ENCODE measurements at regions of chr4 and their contacts with region 1.

Region 1: GRCh38 chr4:17544205-17544604 is 29.2 kb downstream of the CLRN2 start:
- DNase-seq: no peak
- H3K4me3 ChIP-seq: no peak overlapping the region
- H3K27ac ChIP-seq: no peak overlapping the region
- H3K4me1 ChIP-seq: no peaks in the 10 kb centered on the region
- H3K27me3 ChIP-seq: no peaks in the 10 kb centered on the region
- CTCF ChIP-seq: no peak
- EP300 ChIP-seq: no peak
- POLR2A ChIP-seq: no peak

Region 2: GRCh38 chr4:16505726-16506125 is 1038.5 kb before region 1 on chr4:
- intact Hi-C with region 1: no loop called
- DNase-seq: no peak
- H3K4me3 ChIP-seq: no peak overlapping the region
- H3K27ac ChIP-seq: no peak overlapping the region
- H3K4me1 ChIP-seq: no peaks in the 10 kb centered on the region
- H3K27me3 ChIP-seq: no peaks in the 10 kb centered on the region
- CTCF ChIP-seq: no peak
- EP300 ChIP-seq: no peak
- POLR2A ChIP-seq: no peak

Region 3: GRCh38 chr4:17356926-17357325 is 187.3 kb before region 1 on chr4:
- intact Hi-C with region 1: no loop called
- DNase-seq: no peak
- H3K4me3 ChIP-seq: no peak overlapping the region
- H3K27ac ChIP-seq: no peak overlapping the region
- H3K4me1 ChIP-seq: no peaks in the 10 kb centered on the region
- H3K27me3 ChIP-seq: no peaks in the 10 kb centered on the region
- CTCF ChIP-seq: no peak
- EP300 ChIP-seq: no peak
- POLR2A ChIP-seq: no peak

Region 4: DNA sequence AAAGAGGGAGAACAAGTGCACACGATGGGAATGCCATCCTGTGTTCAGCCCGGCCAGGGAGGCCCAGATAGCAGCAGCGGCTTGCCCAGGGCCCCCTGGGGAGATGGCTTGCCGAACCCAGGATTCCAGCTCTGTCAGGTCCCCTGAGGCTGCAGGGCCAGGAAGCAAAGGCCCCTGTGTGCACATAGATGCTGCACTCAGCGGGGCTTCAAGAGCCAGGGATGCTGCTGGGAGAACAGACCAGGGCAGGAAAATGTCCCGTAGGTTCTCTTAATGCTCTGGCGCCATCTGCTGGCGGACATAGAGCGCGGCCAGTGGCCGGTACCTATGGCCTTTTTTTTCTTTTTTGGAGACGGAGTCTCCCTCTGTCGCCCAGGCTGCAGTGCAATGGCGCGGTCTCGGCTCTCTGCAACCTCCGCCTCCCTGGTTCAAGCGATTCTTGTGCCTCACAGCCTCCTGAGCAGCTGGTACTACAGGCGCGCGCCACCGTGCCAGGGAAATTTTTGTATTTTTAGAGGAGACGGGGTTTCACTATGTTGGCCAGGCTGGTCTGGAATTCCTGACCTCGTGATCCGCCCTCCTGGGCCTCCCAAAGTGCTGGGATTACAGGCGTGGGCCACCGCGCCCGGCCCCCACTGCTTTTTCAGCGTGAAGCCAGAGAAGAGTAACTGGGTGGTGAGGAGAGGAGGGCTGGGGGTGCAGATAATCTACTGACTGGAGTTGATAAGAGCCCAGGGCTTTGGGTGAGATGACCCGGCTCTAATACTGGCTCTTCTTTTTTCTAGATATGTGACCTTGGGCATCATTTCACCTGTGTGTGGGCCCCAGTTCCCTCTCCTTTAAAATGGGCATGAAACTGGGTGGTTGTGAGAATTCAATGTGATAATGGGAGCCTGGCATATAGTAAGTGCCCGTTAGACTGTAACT is 92.8 kb after region 1 on chr4:
- intact Hi-C with region 1: loop called in 3 of 4 experiments (anchors 2 to 5 kb)
- DNase-seq: peak; percentile 57 to 84 (median 76)
- H3K4me3 ChIP-seq: no peak overlapping the region
- H3K27ac ChIP-seq: no peak overlapping the region
- H3K4me1 ChIP-seq: no peaks in the 10 kb centered on the region
- H3K27me3 ChIP-seq: no peaks in the 10 kb centered on the region
- CTCF ChIP-seq: peak; percentile 51 to 61 (median 60)
- EP300 ChIP-seq: no peak
- POLR2A ChIP-seq: no peak

Region 5: DNA sequence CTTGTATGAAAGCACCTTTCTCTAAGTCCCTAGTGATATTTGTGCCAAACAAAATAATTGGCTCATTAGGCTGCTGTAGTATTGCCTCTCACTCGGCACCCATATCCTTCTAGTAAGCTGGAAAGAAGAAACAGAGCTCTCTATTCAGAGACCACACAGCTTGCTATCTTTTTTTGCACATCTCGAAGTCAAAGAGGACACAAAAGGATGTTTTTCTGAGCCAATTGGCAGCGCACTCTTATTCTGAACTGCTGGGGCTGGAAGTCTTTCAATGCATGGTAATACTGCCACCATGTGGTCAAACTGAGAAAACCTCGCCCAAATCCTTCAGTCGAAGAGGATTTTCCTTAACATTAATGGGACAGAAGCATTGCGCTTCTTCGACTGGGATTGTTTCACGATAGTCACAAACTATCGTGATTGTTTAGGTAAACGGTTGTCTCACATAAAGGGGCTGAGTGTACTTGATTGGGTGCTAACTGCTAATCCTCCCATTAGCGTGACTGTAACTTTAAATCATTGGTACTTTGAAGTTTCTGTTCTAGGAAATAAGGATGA is 1049.3 kb after region 1 on chr4:
- intact Hi-C with region 1: loop called in 2 of 4 experiments (anchors 10 kb)
- DNase-seq: peak in 4 of 5 donors; percentile 25 to 53 (median 28)
- H3K4me3 ChIP-seq: no peak overlapping the region
- H3K27ac ChIP-seq: no peak overlapping the region
- H3K4me1 ChIP-seq: no peaks in the 10 kb centered on the region
- H3K27me3 ChIP-seq: no peaks in the 10 kb centered on the region
- CTCF ChIP-seq: peak; percentile 30 to 54 (median 38)
- EP300 ChIP-seq: no peak
- POLR2A ChIP-seq: no peak

Measured in ovary (tissue), 10 donors.